GM10248 (cell line): ENCODE measurements at regions of chr19 and their contacts with region 1.

Region 1: GRCh38 chr19:11203194-11204075 is 6.1 kb upstream of the KANK2 start:
- DNase-seq: peak; percentile 71
- CTCF ChIP-seq: peak; percentile 79

Region 2: DNA sequence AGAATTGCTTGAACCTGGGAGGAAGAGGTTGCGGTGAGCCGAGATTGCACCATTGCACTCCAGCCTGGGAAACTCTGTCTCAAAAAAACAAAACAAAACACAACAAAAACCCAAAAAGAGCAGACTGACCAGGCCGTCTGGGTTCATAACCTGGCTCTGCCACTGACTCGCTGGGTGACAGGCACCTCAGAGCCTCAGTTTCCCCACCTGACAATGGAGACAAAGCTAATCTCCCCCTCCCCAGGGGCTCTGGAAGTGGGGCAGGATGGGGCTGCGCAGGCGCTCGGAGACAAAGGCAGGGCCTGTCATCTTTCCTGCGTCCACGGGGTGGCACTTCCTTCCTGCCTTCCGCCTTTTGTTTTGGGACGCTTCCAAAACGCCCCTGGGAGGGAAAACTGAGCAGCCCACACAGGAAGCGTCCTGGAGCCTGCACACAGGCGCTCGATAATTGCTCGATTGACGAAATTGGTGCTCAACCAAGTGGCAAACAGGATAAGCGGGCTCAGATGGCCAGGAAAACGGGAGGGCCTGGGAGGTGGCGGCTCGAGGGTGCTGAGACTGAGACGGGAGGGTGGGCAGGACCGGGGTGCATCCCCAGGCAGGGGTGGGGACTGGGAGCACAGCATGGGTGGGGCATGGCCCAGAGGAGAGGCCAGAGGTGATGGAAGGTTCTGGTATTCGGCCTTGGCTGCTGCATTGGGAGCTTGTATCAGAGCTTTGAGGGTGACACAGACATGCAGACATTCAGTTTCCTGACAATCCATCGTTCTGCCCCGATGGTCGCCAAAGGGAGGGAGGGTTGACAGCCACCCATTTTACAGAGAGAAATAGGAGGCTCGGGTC is 65.7 kb before region 1 on chr19:
- CTCF ChIA-PET with region 1: interaction called, 20 read pairs
- POLR2A ChIA-PET with region 1: no interaction called
- DNase-seq: peak; percentile 73
- CTCF ChIP-seq: peak; percentile 64

Region 3: DNA sequence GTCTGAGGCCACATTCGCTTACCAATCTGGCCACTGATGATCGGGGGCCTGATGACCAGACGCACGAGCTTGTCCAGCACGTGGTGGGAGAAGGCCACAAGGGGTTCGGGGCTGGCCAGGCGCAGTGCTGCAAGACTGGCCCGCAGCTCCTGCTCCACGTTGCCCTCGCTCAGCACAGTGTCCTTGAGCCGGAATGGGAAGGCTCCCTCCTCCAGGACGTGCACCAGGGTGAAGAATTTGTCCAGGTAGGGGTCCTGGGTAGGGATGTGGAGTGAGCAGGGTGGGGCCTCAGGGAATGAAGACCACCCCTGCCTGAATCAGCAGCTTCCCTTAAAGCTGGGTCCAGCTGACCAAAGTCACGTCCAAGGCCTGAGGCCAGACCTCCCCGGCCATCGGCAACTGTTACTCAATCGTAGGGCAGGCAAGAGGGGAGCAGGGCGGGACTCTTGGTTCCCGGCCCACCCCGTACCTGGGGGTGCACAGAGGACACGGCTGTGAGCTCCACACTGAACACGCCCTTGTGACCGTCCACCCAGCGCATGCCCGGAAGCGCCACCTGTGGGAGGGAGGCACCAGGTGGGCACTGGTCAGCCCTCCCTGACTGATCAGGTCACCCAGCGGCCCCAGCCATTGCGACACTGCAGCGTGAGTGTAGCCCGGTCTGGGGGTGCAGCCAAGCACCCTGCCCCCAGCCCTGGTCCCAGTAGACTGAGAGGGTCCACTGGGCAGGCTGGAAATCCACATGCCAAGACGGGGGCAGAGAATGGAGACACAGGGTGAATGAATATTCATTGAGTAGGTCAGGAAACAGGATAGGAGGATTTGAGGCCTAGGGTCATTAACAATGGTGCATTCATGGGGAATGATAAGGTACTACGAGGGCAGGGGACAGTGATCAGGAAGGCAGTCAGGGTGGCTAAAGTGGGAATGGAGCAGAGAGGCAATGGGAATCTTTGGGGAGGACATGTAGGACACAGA is 33.2 kb after region 1 on chr19:
- CTCF ChIA-PET with region 1: no interaction called
- POLR2A ChIA-PET with region 1: no interaction called
- DNase-seq: no peak
- CTCF ChIP-seq: no peak

Region 4: DNA sequence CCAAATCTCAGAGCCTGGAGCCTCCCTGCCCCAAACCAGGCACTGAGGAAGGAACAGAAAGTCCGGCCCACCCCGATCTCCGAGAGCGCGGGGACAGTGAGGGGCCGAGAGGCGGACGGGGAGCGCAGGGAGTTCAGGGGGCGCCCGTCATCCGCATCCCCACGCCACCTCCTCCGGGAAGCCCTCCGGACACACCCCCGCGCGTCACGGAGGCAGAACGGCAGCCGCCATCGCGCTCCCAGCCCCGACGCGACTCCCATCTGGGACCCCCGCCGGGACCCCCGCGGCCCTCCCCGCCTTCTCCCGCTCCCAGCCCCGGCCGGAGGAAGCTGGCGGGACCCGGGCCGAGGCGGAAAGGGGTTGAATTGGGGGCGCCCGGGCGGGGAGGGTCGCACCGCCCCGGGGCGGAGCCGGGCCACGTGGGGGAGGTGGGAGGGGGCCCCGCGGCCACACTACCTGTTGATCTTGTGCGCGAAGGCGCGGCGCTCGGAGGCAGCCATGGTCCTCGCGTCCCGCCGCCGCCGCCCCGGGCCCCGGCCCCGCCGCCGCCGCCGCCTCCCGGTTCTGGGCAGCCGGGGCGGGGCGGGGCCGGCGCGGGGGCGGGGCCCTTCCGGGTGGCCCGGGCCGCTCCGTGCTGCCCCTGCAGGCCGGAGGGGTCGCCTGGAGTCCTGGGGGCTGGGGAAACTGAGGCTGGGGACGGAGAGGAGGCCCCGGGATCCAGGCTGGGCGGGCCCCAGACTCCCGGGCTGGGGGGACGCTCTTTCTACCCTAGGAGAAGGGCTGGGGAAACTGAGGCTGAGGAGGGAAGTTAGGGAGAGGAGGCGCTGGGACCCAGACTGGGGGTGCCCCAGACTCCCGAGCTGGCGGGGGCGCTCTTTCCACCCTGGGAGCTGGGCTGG is 58.8 kb after region 1 on chr19 and contains the start of gene DOCK6:
- CTCF ChIA-PET with region 1: no interaction called
- POLR2A ChIA-PET with region 1: no interaction called
- DNase-seq: peak; percentile 79
- CTCF ChIP-seq: peak; percentile 45

Region 5: GRCh38 chr19:11338569-11339253 is 135.3 kb after region 1 on chr19:
- CTCF ChIA-PET with region 1: no interaction called
- POLR2A ChIA-PET with region 1: no interaction called
- DNase-seq: no peak
- CTCF ChIP-seq: no peak